Gastrocnemius medialis (tissue), 4 donors: ENCODE measurements at regions of chr1 and their contacts with region 1.

Region 1: DNA sequence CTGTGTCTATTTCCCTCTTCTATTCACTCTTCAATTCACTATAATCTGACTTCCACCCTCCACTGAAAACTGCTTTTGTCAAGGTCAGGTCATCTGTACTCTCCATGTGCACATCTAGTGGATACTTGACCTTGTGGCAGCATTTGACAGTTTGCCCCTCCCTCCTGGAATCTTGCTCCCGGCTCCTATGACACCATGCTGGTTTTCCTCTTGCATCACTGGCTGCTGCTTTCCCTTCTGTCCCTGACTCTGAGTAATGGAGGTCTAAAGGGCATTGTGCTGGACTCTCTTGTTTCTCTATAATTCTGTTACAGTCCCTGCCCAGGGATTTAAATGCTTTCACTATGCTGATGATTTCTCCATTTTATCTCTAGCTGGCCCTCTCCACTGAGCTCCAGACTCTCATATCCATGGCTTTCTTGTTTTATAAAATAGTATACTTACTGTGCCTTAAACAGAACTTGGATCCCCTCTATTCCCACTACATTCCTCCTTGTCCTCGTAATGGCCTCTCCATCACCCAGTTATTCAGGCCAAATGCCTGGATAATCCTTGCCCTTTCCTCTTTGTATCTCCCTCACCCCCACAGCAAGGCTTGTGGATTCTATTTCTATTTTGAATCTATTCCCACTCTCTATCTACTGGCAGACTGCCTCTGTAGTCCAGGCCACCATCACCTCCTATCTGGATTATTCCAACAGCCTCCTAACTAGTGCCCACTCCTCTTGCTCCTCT is 36.8 kb upstream of the PODN start:
- DNase-seq: peak; percentile 6 to 73
- ATAC-seq: peak; percentile 62 to 98
- H3K4me3 ChIP-seq: no peak overlapping the region
- H3K27ac ChIP-seq: peak overlapping the region; percentile 2 to 70 (median 64)
- H3K4me1 ChIP-seq: peaks cover 12 to 14% of the 10 kb centered on the region in 2 donors
- H3K27me3 ChIP-seq: no peaks in the 10 kb centered on the region
- CTCF ChIP-seq: no peak
- POLR2A ChIP-seq: no peak

Region 2: DNA sequence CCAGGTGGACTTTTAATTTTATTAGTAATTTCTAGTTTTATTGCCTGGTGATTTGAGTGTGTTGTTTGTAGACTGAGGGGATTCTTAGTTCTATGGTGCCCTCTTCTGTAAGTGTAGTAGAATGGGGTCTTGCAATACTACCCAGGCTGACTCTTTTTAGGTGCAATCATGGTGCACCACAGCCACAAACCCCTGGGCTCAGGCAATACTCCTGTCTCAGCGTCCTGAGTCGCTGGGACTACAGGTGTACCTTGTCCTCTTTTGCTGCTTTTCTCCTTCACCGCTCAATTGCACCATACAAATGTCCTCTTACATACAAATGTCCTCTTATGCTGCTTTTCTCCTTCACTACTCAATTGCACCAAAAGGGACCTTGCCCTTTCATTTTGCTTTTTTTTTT is 55.1 kb before region 1 on chr1:
- in situ Hi-C with region 1: no loop called
- intact Hi-C with region 1: no loop called
- DNase-seq: no peak
- ATAC-seq: no peak
- H3K4me3 ChIP-seq: no peak overlapping the region
- H3K27ac ChIP-seq: no peak overlapping the region
- H3K4me1 ChIP-seq: no peaks in the 10 kb centered on the region
- H3K27me3 ChIP-seq: no peaks in the 10 kb centered on the region
- CTCF ChIP-seq: peak in 1 of 5 experiments; percentile 29
- POLR2A ChIP-seq: no peak

Region 3: GRCh38 chr1:53091841-53092645 is 66.8 kb after region 1 on chr1:
- in situ Hi-C with region 1: no loop called
- intact Hi-C with region 1: loop called (anchors 2 kb)
- DNase-seq: no peak
- ATAC-seq: no peak
- H3K4me3 ChIP-seq: no peak overlapping the region
- H3K27ac ChIP-seq: no peak overlapping the region
- H3K4me1 ChIP-seq: no peaks in the 10 kb centered on the region
- H3K27me3 ChIP-seq: no peaks in the 10 kb centered on the region
- CTCF ChIP-seq: no peak
- POLR2A ChIP-seq: no peak

Region 4: DNA sequence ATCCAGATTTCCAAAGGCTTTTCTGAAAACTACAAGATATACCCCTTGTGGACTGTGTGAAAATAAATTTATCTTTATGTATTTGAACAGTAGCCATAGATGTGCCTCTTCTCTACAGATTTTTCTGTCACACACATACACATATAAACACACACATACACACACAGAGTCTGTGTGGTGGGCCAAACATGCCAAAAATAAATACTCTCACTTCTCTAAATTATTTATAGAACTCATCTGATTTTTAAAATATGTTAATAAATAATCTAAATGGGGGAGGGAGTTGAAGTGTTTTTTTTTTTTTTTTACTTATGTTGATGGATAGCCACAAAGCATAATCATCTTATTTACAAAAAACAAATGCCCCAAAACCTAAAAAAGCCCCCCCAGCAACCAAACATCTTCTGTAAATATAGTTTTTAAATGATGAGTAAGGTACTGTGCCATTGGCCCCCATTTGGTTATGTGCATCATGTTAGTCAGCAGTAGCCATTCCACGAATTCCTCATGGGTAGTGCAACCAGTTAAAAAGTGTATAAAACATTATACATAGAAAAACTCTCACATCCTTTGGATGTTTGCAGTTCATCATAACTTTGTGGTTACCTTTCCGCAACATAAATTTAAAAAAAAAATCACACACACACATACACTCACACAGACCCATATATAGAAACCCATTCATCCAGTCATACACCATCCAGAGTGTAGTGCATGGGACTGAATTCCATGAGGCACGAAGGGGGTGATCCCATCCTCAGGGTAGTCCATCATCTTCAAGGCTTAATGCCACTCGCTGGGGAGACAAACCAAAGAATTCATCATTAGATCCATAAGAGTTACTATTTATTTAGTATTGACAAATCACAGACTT is 221.3 kb after region 1 on chr1:
- in situ Hi-C with region 1: no loop called
- intact Hi-C with region 1: no loop called
- DNase-seq: no peak
- ATAC-seq: no peak
- H3K4me3 ChIP-seq: no peak overlapping the region
- H3K27ac ChIP-seq: no peak overlapping the region
- H3K4me1 ChIP-seq: no peaks in the 10 kb centered on the region
- H3K27me3 ChIP-seq: peaks cover 0 to 4% (median 0%) of the 10 kb centered on the region in 3 donors
- CTCF ChIP-seq: no peak
- POLR2A ChIP-seq: no peak